Naive thymus-derived CD8-positive, alpha-beta T cell (primary cell): ENCODE measurements at regions of chr6 and their contacts with region 1.

Region 1: DNA sequence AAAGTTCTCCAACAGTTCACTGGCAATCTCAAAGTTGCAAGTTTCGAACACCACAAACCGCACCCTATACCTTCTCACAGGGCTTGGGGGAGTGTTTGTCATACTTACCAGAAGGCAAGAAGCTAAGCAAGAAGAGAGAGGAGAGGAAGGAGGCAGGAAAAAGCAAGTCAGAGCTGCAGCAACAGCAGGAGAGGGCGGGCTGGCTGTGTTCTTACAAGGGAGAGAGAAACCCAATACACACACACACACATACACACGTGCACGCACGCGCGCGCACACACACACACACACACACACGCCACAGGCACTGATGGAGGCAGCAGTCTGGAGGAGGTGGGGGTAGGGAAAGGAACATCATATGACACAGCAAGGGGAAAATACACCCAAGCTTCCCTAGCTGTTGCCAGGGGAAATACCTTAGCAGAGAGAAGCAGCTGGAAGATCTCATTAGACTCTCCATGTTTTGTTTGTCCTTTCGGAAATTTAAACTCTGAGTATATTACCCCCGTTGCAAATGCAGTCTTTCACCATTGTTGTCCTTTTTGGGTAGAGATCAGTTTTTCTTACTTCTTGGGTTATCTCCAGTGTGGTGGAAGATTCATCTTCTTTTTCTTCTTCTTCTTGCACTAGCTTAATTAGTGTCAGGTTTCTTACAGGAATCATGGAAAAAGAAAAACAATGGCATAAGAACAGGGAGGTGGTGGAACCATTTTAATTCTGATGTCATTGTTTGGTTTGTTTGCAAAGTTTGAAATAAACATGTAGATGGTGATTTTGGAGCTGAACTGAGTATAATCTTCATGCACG is at the start of gene TXLNB:
- DNase-seq: peak; percentile 48 to 92 (median 79)
- ATAC-seq: peak; percentile 88 to 89
- H3K4me3 Mint-ChIP-seq: peak within 1 kb of the TSS; percentile 69 to 91 (median 85)
- H3K27ac Mint-ChIP-seq: peak within 1 kb of the TSS; percentile 94 to 99 (median 97)
- H3K4me1 Mint-ChIP-seq: peaks cover 30 to 80% (median 66%) of the 10 kb centered on the region in 4 donors
- H3K27me3 Mint-ChIP-seq: peaks cover 0 to 1% (median 0%) of the 10 kb centered on the region in 5 donors
- polyA plus RNA-seq, gene TXLNB: 0.11 to 0.65 TPM in 2 of 3 donors, not detected in the other

Region 2: DNA sequence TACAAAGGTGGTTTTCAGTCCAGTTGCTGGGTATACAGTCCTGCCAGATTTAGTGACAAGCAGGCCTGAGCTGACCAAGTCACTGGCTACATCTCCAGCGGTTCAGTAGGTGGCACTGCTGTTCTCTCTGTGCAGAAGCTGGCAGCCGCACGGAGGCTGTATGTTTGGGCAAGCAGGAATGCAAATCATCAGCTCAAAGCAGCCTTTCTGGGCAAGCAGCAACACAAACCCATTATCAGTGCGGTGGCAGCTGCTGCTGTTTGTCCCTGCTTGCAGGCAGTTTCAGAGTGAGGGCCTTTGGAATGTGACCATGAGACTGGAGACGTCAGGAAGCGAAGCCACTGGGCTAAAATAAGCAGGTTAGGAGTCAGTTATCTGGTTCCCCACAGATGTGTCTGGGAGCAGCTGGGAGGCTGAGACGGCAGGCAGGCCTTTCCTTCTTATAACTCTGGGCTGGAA is 72.7 kb before region 1 on chr6:
- POLR2A ChIA-PET with region 1: interaction called, 16 read pairs
- DNase-seq: peak; percentile 36 to 86 (median 65)
- ATAC-seq: peak; percentile 100
- H3K4me3 Mint-ChIP-seq: peak overlapping the region in 5 of 10 donors; percentile 37 to 77 (median 46)
- H3K27ac Mint-ChIP-seq: peak overlapping the region; percentile 58 to 97 (median 88)
- H3K4me1 Mint-ChIP-seq: peaks cover 4 to 14% (median 10%) of the 10 kb centered on the region in 4 donors
- H3K27me3 Mint-ChIP-seq: no peaks in the 10 kb centered on the region

Region 3: DNA sequence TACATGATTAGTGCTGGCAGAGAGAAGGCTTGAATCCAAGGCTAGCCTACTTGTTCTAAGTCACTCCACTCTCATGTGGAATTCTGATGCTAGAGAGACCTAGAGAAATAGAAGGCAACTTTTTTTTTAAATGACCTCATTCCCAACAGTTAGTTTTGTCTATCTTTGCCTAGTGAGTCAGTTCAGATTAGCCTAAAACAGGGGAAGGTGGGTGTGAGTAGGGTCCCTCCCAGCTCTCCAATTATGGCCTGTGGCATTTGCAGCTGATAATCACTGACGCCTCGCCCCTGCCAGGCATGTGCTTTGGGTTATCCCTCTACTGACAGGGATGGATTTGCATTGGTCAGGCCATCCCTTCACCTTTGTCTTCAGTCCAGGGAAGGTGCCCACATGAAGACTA is 13.8 kb before region 1 on chr6:
- POLR2A ChIA-PET with region 1: interaction called, 12 read pairs
- DNase-seq: no peak
- ATAC-seq: no peak
- H3K4me3 Mint-ChIP-seq: no peak overlapping the region
- H3K27ac Mint-ChIP-seq: peak overlapping the region; percentile 27 to 91 (median 78)
- H3K4me1 Mint-ChIP-seq: peaks cover 14 to 44% (median 32%) of the 10 kb centered on the region in 4 donors
- H3K27me3 Mint-ChIP-seq: no peaks in the 10 kb centered on the region

Region 4: GRCh38 chr6:139323511-139324300 is 31.7 kb after region 1 on chr6:
- POLR2A ChIA-PET with region 1: interaction called, 59 read pairs
- DNase-seq: peak; percentile 58 to 94 (median 84)
- ATAC-seq: peak; percentile 86 to 87
- H3K4me3 Mint-ChIP-seq: peak overlapping the region; percentile 85 to 97 (median 88)
- H3K27ac Mint-ChIP-seq: peak overlapping the region; percentile 97 to 100 (median 99)
- H3K4me1 Mint-ChIP-seq: peaks cover 19 to 41% (median 33%) of the 10 kb centered on the region in 4 donors
- H3K27me3 Mint-ChIP-seq: no peaks in the 10 kb centered on the region

Region 5: GRCh38 chr6:139343052-139343750 is 51.2 kb after region 1 on chr6:
- POLR2A ChIA-PET with region 1: interaction called, 17 read pairs
- DNase-seq: no peak
- ATAC-seq: no peak
- H3K4me3 Mint-ChIP-seq: peak overlapping the region in 8 of 10 donors; percentile 2 to 67 (median 39)
- H3K27ac Mint-ChIP-seq: peak overlapping the region in 9 of 10 donors; percentile 3 to 74 (median 43)
- H3K4me1 Mint-ChIP-seq: peaks cover 12 to 31% (median 27%) of the 10 kb centered on the region in 4 donors
- H3K27me3 Mint-ChIP-seq: no peaks in the 10 kb centered on the region

Region 6: GRCh38 chr6:139364302-139364981 is 72.4 kb after region 1 on chr6:
- POLR2A ChIA-PET with region 1: interaction called, 11 read pairs
- DNase-seq: peak in 3 of 10 donors; percentile 72 to 81 (median 72)
- ATAC-seq: peak; percentile 43 to 60
- H3K4me3 Mint-ChIP-seq: peak overlapping the region in 1 of 10 donors; percentile 44
- H3K27ac Mint-ChIP-seq: peak overlapping the region; percentile 4 to 73 (median 38)
- H3K4me1 Mint-ChIP-seq: peaks cover 12 to 50% (median 46%) of the 10 kb centered on the region in 4 donors
- H3K27me3 Mint-ChIP-seq: no peaks in the 10 kb centered on the region